ENCODE measurements at regions of chr16 and their contacts with region 1.

Region 1: DNA sequence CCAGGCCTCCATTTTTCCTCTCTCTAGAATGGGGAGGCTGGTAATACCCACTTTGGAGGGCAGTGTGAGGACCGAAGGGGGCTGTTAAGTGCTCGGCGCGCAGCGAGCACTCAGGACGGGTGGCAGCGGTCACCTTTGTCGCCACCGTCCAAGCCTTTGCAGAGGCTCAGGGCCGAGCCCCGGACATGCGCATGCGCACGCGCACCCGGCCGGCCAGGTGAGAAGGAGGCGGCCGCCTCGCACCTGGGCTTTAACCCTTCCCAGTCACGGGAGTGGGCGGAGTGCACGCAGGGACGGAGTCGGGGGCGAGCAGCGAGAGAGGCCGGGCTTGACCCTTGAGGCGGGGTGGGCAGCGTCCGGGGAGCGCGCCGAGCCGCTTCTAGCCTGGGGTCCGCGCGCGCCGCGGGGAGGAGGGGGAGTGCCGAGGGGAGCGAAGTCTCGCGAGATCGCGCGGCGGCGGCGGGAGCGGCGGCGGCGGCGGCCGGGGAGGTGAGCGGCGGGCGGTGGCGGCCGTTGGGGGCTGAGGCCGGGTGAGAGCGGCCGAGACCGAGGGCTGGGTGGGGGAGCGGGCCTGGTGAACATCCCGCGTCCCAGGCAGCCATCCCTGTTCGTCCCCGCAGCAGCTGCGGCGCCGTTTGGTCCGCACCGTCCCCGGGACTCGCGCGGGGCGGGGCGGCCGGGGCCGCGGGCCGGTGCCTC is at the start of gene MRTFB:
- DNase-seq: peak; percentile 27
- ATAC-seq: peak; percentile 97
- H3K4me3 ChIP-seq: peak within 1 kb of the TSS; percentile 84
- H3K27ac ChIP-seq: peak within 1 kb of the TSS; percentile 68
- H3K4me1 ChIP-seq: no peaks in the 10 kb centered on the region
- H3K27me3 ChIP-seq: no peaks in the 10 kb centered on the region; the same call in 1 of the 2 replicates
- CTCF ChIP-seq: no peak
- POLR2A ChIP-seq: no peak
- RAD21 ChIP-seq: no peak; the same call in 1 of the 2 replicates
- total RNA-seq, gene MRTFB: 5.4 and 6.9 TPM in 2 replicates

Region 2: GRCh38 chr16:13935408-13935807 is 135.6 kb before region 1 on chr16:
- CTCF ChIA-PET with region 1: no interaction called
- POLR2A ChIA-PET with region 1: no interaction called
- dilution Hi-C with region 1: no loop called
- in situ Hi-C with region 1: loop called (anchors 10 kb)
- intact Hi-C with region 1: no loop called
- DNase-seq: no peak
- ATAC-seq: no peak
- H3K4me3 ChIP-seq: no peak overlapping the region
- H3K27ac ChIP-seq: no peak overlapping the region
- H3K4me1 ChIP-seq: peaks cover 2% of the 10 kb centered on the region
- H3K27me3 ChIP-seq: no peaks in the 10 kb centered on the region
- CTCF ChIP-seq: peak; percentile 16; the same call in 1 of the 2 replicates
- POLR2A ChIP-seq: no peak
- RAD21 ChIP-seq: no peak

Region 3: DNA sequence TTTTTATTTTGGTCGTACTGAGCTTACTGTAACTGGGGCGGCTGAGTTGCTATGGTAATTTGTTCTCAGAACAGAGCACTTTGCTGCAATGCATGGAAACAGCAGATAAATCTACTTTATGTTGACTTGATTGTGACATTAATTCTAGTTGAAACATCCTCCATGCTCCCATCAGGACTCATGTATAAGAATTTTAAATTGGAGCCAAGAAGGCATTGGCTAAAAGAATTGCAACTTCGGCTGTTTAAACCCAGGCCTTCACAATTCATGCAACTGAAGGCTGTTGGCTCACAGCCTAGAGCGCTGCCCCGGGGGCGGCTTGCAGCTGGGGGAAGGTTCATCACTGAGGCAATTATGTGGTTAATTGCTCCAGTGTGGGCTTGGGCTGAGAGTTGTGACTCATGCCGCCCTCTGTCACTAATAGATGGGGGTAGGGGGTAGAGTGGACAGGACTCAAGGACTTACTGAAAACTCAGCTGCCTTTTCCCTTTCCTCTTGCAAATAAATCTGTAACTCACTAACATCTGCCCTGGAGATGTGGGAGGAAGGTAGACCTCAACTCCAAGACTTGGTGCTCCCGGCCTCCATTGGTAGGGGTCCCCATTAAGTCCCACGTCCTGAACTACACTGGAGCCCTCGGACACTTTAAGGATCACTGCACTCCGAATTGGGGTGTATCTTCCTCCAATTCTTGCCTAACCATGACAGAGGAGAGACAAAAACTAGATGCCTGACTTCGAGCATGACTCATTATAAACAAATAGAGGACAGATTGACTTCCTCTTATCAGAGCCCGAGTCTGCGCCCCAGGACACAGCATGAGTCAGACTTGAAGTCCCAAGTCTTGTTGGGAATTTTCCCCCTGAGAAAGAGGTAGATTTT is 113.6 kb before region 1 on chr16:
- CTCF ChIA-PET with region 1: no interaction called
- POLR2A ChIA-PET with region 1: no interaction called
- dilution Hi-C with region 1: no loop called
- in situ Hi-C with region 1: no loop called
- intact Hi-C with region 1: loop called (anchors 10 kb)
- DNase-seq: peak; percentile 95
- ATAC-seq: peak; percentile 89
- H3K4me3 ChIP-seq: peak overlapping the region; percentile 32; the same call in 1 of the 2 replicates
- H3K27ac ChIP-seq: peak overlapping the region; percentile 94
- H3K4me1 ChIP-seq: peaks cover 5% of the 10 kb centered on the region
- H3K27me3 ChIP-seq: no peaks in the 10 kb centered on the region
- CTCF ChIP-seq: no peak
- POLR2A ChIP-seq: no peak
- RAD21 ChIP-seq: no peak

Region 4: DNA sequence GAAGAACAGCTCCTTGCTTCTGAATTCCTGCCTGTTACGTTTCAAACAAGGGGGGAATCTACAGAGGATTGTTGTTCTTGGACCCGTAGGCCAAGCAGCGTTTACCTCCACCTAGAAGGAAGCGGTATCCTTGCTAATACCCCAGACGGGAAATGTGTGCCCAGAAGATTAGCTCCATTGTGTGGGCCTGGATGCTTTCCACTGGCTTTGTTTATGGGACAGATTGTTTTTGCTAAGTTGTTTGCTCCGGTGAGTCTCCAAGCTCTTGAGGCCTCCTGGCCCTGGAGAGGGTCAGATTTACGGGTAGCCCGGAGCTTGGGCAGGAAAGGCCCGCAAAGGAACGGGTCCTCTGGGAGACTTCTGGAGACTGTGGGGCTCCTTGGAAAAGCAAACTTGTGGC is 28.3 kb before region 1 on chr16:
- CTCF ChIA-PET with region 1: no interaction called
- POLR2A ChIA-PET with region 1: no interaction called
- dilution Hi-C with region 1: no loop called
- in situ Hi-C with region 1: no loop called
- intact Hi-C with region 1: no loop called
- DNase-seq: no peak
- ATAC-seq: no peak
- H3K4me3 ChIP-seq: no peak overlapping the region
- H3K27ac ChIP-seq: no peak overlapping the region
- H3K4me1 ChIP-seq: no peaks in the 10 kb centered on the region
- H3K27me3 ChIP-seq: peaks cover 10% of the 10 kb centered on the region
- CTCF ChIP-seq: no peak
- POLR2A ChIP-seq: no peak
- RAD21 ChIP-seq: no peak

Region 5: GRCh38 chr16:14186007-14186794 is 115.2 kb after region 1 on chr16:
- CTCF ChIA-PET with region 1: no interaction called
- POLR2A ChIA-PET with region 1: no interaction called
- dilution Hi-C with region 1: no loop called
- in situ Hi-C with region 1: no loop called
- intact Hi-C with region 1: loop called (anchors 5 kb)
- DNase-seq: peak; percentile 79
- ATAC-seq: peak; percentile 79
- H3K4me3 ChIP-seq: peak overlapping the region; percentile 10; the same call in 1 of the 2 replicates
- H3K27ac ChIP-seq: no peak overlapping the region
- H3K4me1 ChIP-seq: peaks cover 8% of the 10 kb centered on the region
- H3K27me3 ChIP-seq: 0 out of 2 replicates have a peak, but pooled peaks cover 2% of the 10 kb centered on the region
- CTCF ChIP-seq: peak; percentile 42
- POLR2A ChIP-seq: no peak
- RAD21 ChIP-seq: peak; percentile 37

Region 6: GRCh38 chr16:14240219-14240843 is 169.3 kb after region 1 on chr16:
- CTCF ChIA-PET with region 1: no interaction called
- POLR2A ChIA-PET with region 1: no interaction called
- dilution Hi-C with region 1: no loop called
- in situ Hi-C with region 1: no loop called
- intact Hi-C with region 1: loop called (anchors 5 kb)
- DNase-seq: no peak
- ATAC-seq: peak; percentile 72
- H3K4me3 ChIP-seq: no peak overlapping the region
- H3K27ac ChIP-seq: no peak overlapping the region
- H3K4me1 ChIP-seq: no peaks in the 10 kb centered on the region
- H3K27me3 ChIP-seq: no peaks in the 10 kb centered on the region
- CTCF ChIP-seq: no peak
- POLR2A ChIP-seq: no peak
- RAD21 ChIP-seq: no peak

Region 7: GRCh38 chr16:14285513-14286385 is 214.7 kb after region 1 on chr16:
- CTCF ChIA-PET with region 1: no interaction called
- POLR2A ChIA-PET with region 1: no interaction called
- dilution Hi-C with region 1: no loop called
- in situ Hi-C with region 1: no loop called
- intact Hi-C with region 1: loop called (anchors 5 kb)
- DNase-seq: peak; percentile 97
- ATAC-seq: peak; percentile 95
- H3K4me3 ChIP-seq: peak overlapping the region; percentile 66
- H3K27ac ChIP-seq: peak overlapping the region; percentile 26; the same call in 1 of the 2 replicates
- H3K4me1 ChIP-seq: no peaks in the 10 kb centered on the region
- H3K27me3 ChIP-seq: no peaks in the 10 kb centered on the region
- CTCF ChIP-seq: no peak
- POLR2A ChIP-seq: no peak
- RAD21 ChIP-seq: no peak

Measured in IMR-90 (cell line).